ENCODE measurements at regions of chr13 and their contacts with region 1.

Region 1: GRCh38 chr13:26929971-26930730 is 169.6 kb upstream of the GPR12 start:
- DNase-seq: peak in 1 of 2 donors; percentile 67
- H3K4me3 ChIP-seq: no peak overlapping the region
- H3K27ac ChIP-seq: no peak overlapping the region
- H3K4me1 ChIP-seq: peaks cover 0 to 2% of the 10 kb centered on the region in 2 donors
- H3K27me3 ChIP-seq: no peaks in the 10 kb centered on the region
- CTCF ChIP-seq: peak; percentile 57 to 90 (median 85)

Region 2: DNA sequence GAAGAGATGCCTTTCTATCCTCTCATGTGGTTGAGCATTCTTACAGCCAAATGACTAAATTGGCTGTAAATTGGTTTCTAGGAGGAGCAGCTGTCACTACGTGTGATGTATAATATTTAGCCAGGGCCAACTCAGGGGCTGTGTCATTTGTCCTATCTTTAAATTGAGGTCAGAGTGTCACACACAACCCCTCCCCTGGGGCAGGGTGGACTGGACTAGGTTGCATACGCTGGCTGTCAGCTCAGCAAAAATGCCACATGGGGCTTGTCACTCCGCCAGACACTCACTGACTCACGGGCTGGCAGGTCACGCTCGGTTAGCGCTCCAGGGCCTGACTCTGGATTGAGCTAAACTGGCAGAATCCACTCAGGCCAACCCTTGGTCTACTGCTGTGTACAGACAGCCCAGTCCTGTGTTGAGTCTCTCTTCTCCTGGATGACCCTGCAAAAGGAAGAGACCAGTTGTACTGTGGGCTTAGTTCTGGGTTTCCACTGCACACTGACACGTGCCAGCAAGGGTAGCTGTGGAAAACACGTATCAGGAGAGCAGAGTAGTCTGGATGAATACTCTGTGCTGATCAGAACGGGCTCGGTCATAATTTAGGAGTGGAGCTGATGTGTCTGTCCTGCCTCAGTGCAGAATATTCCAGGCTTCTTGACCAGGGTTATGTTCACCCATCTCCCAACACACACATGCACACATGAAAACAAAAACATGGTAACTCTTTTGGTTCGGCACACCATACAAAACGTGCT is 907.4 kb before region 1 on chr13:
- intact Hi-C with region 1: no loop called
- DNase-seq: peak in 1 of 2 donors; percentile 77
- H3K4me3 ChIP-seq: no peak overlapping the region
- H3K27ac ChIP-seq: no peak overlapping the region
- H3K4me1 ChIP-seq: peaks cover 0 to 8% of the 10 kb centered on the region in 2 donors
- H3K27me3 ChIP-seq: no peaks in the 10 kb centered on the region
- CTCF ChIP-seq: no peak

Region 3: GRCh38 chr13:26707122-26708006 is 222.8 kb before region 1 on chr13:
- intact Hi-C with region 1: loop called (anchors 2 kb)
- DNase-seq: no peak
- H3K4me3 ChIP-seq: no peak overlapping the region
- H3K27ac ChIP-seq: no peak overlapping the region
- H3K4me1 ChIP-seq: no peaks in the 10 kb centered on the region
- H3K27me3 ChIP-seq: peaks cover 3% of the 10 kb centered on the region
- CTCF ChIP-seq: peak in 2 of 3 experiments; percentile 24 to 40

Region 4: DNA sequence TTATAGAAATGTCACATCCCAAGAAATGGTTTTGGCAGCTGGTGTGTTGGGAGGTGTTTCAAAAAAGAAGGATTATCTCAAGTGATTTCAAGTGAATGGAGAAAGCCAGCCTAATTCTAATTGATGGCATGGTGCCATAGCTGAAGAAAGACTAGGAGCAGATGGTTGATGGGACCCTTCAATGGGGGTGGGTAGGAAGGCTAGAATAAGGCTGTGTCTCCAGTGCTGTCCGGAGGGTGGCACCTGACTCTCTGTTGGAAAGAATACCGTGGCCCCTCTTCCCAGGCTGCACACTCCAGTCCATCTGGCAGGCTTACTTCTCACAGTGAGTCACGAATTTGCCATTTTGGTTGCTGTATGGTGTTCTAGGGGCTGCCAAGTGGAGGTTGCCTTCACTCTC is 118.6 kb before region 1 on chr13:
- intact Hi-C with region 1: no loop called
- DNase-seq: no peak
- H3K4me3 ChIP-seq: no peak overlapping the region
- H3K27ac ChIP-seq: no peak overlapping the region
- H3K4me1 ChIP-seq: no peaks in the 10 kb centered on the region
- H3K27me3 ChIP-seq: no peaks in the 10 kb centered on the region
- CTCF ChIP-seq: no peak

Region 5: DNA sequence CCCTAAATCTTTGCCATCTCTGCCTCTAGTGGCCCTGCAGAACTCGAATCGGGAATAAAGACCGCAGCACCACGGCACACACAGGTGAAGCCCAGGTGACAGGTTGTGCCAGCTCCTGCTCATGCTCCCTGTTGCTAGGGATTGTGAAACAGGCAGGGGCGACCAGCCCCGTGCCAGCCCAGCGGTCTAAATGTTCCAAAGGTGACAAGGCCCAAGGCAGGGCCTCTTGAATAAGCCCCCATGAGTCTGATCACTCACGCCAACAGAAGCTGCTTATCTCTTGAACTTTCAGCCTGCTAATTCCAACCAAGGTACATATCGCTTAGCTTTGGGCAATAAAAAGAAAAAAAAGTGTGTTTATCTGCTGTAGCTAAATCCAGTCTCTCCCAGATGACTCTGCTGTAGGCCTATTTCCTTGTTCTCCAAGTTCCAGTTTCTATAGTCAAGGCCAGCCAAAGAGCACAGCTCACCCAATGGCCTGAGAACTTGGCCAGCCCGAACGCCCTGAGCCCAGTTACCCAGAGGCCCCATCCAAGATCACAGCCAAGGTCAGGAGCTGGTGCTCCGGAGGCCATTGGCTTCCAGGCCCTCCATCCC is 21.5 kb after region 1 on chr13:
- intact Hi-C with region 1: no loop called
- DNase-seq: no peak
- H3K4me3 ChIP-seq: no peak overlapping the region
- H3K27ac ChIP-seq: no peak overlapping the region
- H3K4me1 ChIP-seq: no peaks in the 10 kb centered on the region
- H3K27me3 ChIP-seq: no peaks in the 10 kb centered on the region
- CTCF ChIP-seq: no peak

Measured in ascending aorta (tissue), 2 donors.